H1 (cell line): ENCODE measurements at regions of chr7 and their contacts with region 1.

Region 1: DNA sequence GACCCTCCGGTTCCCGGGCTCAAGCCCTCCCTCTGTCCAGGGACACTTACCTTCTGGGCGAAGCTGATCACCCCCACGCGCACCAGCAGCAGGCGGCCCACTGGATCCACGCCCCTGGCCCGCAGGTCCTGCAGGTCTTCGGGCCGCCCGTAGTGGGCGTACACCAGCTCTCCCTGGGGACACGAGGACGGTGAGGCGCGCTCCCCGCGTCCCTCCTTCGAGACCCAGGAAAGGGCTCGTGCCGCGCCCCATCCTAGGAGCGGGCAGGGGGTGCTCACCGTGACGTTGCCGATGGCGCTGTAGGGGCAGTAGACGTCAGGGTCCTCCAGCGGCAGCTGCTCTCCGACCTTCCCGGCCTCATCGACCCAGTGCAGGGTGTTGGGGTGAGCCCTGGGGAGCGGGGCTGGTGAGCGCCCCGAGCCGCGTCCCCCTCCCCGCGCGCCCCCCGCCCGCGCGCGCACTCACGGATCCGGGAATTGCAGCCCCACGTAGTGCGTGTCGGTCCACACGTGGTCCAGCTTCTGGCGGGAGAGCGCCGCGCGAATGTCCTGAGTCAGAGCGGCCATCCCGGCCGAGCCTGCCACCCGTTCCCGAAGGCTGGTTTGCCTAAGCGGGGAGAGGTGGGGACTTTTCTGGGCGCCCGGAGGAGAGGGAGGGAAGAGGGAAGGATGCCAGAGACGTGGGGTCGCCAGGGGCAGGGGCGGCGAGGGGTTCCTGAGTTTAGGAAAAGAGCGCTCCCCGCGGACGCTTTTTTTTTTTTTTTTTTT is 8.2 kb downstream of the TFR2 start:
- DNase-seq: peak in 1 of 2 experiments; percentile 84
- H3K4me3 ChIP-seq: peak overlapping the region; percentile 60 to 89 (median 61)
- H3K27ac ChIP-seq: no peak overlapping the region
- H3K4me1 ChIP-seq: peaks cover 0 to 3% (median 3%) of the 10 kb centered on the region in 4 experiments; a peak in 5 of 7 replicates
- H3K27me3 ChIP-seq: peaks cover 0 to 16% (median 9%) of the 10 kb centered on the region in 4 experiments; a peak in 5 of 7 replicates
- CTCF ChIP-seq: peak; percentile 45 to 71 (median 63)
- EP300 ChIP-seq: no peak
- POLR2A ChIP-seq: no peak
- RAD21 ChIP-seq: peak; percentile 22 to 32; a peak in 2 of 4 replicates

Region 2: DNA sequence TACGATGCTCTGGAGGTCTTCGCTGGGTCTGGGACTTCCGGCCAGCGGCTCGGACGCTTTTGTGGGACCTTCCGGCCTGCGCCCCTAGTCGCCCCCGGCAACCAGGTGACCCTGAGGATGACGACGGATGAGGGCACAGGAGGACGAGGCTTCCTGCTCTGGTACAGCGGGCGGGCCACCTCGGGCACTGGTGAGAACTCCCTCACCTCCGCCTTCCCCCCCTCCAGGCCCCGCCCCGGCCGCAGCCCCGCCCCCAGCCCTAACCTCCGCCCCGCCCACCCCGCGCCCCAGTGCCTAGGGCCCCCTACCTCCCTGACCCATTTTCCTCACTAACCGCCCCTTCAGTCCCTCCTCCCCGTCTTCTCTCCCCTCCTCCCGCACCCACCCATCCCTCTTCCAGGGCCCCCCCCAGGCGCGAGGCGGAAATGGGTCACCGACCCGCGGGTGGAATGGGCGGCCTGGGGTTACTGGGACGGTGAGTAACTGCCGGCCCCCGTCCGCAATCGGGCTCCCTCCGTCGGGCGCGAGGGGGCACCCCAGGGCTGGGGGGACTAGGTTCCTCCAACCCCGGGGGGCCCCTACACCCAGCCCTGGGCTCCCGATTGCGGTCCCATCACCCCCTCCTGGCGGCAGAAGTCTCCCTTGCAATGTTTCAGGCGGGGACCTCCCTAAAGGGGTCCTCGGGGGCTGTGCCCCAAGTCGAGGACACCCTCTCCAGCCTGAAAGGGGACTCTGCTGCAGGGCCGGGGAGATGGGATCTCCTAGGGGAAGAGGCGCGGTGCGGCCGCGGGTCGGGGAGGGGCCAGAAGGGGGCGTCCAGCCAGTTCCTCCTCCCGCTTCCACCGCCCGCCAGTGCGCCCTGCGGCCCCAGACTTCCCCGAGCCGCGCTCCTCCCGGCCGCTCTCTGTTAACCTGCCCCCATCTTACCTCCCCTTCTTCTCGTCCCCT is 28.8 kb before region 1 on chr7:
- CTCF ChIA-PET with region 1: interaction called, 11 read pairs
- POLR2A ChIA-PET with region 1: interaction called, 5 read pairs
- DNase-seq: peak in 1 of 2 experiments; percentile 92
- H3K4me3 ChIP-seq: peak overlapping the region; percentile 68 to 82 (median 78)
- H3K27ac ChIP-seq: peak overlapping the region; percentile 48; the same call in 1 of the 2 replicates
- H3K4me1 ChIP-seq: peaks cover 0 to 31% (median 20%) of the 10 kb centered on the region in 4 experiments; a peak in 6 of 7 replicates
- H3K27me3 ChIP-seq: peaks cover 0 to 10% (median 4%) of the 10 kb centered on the region in 4 experiments; a peak in 2 of 7 replicates
- CTCF ChIP-seq: peak in 1 of 3 experiments; percentile 27; a peak in 2 of 4 replicates
- EP300 ChIP-seq: no peak
- POLR2A ChIP-seq: peak in 1 of 2 experiments; percentile 88; a peak in 2 of 3 replicates
- RAD21 ChIP-seq: peak; percentile 12 to 16; a peak in 2 of 4 replicates

Region 3: GRCh38 chr7:100621554-100621953 is 11.6 kb before region 1 on chr7:
- CTCF ChIA-PET with region 1: interaction called, 73 read pairs
- POLR2A ChIA-PET with region 1: interaction called, 9 read pairs
- DNase-seq: no peak
- H3K4me3 ChIP-seq: no peak overlapping the region
- H3K27ac ChIP-seq: no peak overlapping the region
- H3K4me1 ChIP-seq: peaks cover 0 to 5% (median 0%) of the 10 kb centered on the region in 4 experiments; a peak in 1 of 7 replicates
- H3K27me3 ChIP-seq: peaks cover 0 to 5% (median 2%) of the 10 kb centered on the region in 4 experiments; a peak in 3 of 7 replicates
- CTCF ChIP-seq: no peak
- EP300 ChIP-seq: no peak
- POLR2A ChIP-seq: no peak
- RAD21 ChIP-seq: no peak

Region 4: GRCh38 chr7:100655908-100656674 is 23.0 kb after region 1 on chr7 and contains the start of gene ACTL6B:
- CTCF ChIA-PET with region 1: interaction called, 46 read pairs
- POLR2A ChIA-PET with region 1: interaction called, 7 read pairs
- DNase-seq: peak in 1 of 2 experiments; percentile 99
- H3K4me3 ChIP-seq: peak within 1 kb of the TSS; percentile 9 to 45 (median 24); a peak in 6 of 8 replicates
- H3K27ac ChIP-seq: no peak within 1 kb of the TSS
- H3K4me1 ChIP-seq: peaks cover 0 to 5% (median 0%) of the 10 kb centered on the region in 4 experiments; a peak in 2 of 7 replicates
- H3K27me3 ChIP-seq: peaks cover 10 to 35% (median 23%) of the 10 kb centered on the region in 4 experiments
- CTCF ChIP-seq: no peak
- EP300 ChIP-seq: no peak
- POLR2A ChIP-seq: no peak
- RAD21 ChIP-seq: no peak
- total RNA-seq, gene ACTL6B: 1.7 and 2.1 TPM in 2 replicates

Region 5: GRCh38 chr7:100675581-100676350 is 42.6 kb after region 1 on chr7:
- CTCF ChIA-PET with region 1: interaction called, 12 read pairs
- POLR2A ChIA-PET with region 1: interaction called, 20 read pairs
- DNase-seq: peak in 1 of 2 experiments; percentile 80
- H3K4me3 ChIP-seq: peak overlapping the region; percentile 43 to 99 (median 62)
- H3K27ac ChIP-seq: no peak overlapping the region
- H3K4me1 ChIP-seq: peaks cover 0 to 7% (median 2%) of the 10 kb centered on the region in 4 experiments; a peak in 6 of 7 replicates
- H3K27me3 ChIP-seq: peaks cover 0 to 8% (median 6%) of the 10 kb centered on the region in 4 experiments; a peak in 4 of 7 replicates
- CTCF ChIP-seq: no peak
- EP300 ChIP-seq: no peak
- POLR2A ChIP-seq: no peak
- RAD21 ChIP-seq: no peak

Region 6: DNA sequence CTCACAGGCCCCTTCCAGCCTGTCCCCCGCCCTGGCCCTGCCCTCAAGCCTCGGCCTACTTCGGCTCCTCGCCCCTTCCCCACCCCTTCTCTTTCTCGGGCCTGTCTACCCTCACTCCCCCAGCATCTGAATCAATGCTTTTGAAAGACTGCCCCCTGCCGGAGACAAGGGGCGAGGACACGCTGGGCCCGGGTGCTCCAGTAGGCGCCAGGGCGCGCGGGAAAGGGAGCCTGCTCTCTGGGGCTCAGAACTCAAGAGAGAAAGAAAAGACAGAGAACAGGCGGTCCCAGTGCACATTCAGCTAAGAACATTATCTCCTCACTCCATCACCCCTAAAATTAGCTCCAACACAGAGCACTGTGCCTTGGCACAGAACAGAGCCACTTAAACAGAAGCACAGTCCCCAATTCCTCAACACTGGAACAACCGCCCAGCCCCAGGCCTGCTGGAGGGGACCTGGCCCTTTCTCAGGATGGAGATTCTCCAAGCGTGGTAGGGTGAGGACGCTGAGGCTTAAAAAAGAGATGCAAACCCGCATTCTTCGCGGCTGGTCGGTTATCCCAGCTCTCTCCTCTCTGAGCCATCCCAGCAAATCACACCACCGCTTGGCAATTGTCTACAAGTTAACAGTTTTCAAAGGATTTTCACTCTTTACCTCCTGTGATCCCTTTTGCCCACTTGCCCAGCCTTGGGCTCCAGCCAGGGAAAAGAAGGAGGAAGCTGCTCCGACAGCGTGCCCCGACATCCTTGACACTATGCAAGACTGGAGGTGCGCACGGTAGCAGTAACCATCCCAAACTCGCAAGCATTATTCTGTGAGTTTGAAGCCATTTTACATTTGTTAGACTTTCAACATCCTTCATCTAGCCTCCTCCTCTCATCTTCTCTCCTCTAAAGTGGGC is 58.8 kb after region 1 on chr7:
- CTCF ChIA-PET with region 1: interaction called, 38 read pairs
- POLR2A ChIA-PET with region 1: interaction called, 10 read pairs
- DNase-seq: peak; percentile 54 to 96
- H3K4me3 ChIP-seq: peak overlapping the region; percentile 82 to 95 (median 90)
- H3K27ac ChIP-seq: no peak overlapping the region
- H3K4me1 ChIP-seq: peaks cover 6 to 20% (median 12%) of the 10 kb centered on the region in 4 experiments
- H3K27me3 ChIP-seq: no peaks in the 10 kb centered on the region
- CTCF ChIP-seq: peak in 2 of 3 experiments; percentile 87 to 93; a peak in 3 of 4 replicates
- EP300 ChIP-seq: no peak
- POLR2A ChIP-seq: peak in 1 of 2 experiments; percentile 66; a peak in 1 of 3 replicates
- RAD21 ChIP-seq: peak; percentile 66 to 80

Region 7: DNA sequence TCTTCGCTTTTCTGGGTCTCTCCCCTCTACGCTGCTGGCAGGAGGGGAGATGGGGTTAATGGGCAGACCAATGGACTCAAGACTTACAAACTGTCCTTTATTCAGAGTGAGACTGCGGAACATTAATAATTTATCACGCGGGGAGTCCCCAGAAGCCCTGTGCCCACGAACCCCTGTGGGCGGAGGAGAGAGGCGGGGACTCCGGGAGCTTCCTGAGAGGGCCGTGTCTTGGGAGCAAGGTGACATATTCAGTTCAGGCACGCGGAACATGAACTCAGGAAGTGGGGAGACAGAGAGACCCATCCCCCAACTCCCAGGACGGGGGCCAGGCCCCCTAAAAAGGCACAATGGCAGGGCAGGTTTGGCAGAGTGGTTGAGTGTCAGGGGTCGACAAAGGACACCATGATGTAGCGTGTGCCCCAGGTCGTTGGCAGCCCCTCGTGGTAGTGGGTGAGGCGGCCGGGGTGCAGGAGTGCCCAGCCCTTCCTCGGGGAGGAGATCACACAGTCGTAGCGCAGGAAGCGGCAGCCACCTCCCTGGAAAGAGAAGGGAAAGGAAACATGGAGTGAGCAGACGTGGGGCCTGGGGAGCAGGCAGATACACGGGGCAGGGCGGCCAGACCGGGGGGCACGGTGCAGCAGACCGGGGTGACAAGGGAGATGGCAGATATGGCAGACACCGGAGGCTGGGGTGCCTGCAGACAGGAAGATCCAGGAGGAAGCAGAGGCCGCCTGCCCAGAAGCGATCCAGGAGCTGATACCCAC is 572.9 kb after region 1 on chr7:
- CTCF ChIA-PET with region 1: no interaction called
- POLR2A ChIA-PET with region 1: no interaction called
- DNase-seq: no peak
- H3K4me3 ChIP-seq: no peak overlapping the region
- H3K27ac ChIP-seq: no peak overlapping the region
- H3K4me1 ChIP-seq: peaks cover under 1 to 8% (median 5%) of the 10 kb centered on the region in 4 experiments; a peak in 6 of 7 replicates
- H3K27me3 ChIP-seq: peaks cover 0 to 16% (median 7%) of the 10 kb centered on the region in 4 experiments; a peak in 5 of 7 replicates
- CTCF ChIP-seq: no peak
- EP300 ChIP-seq: no peak
- POLR2A ChIP-seq: no peak
- RAD21 ChIP-seq: no peak

Region 8: GRCh38 chr7:101258243-101258731 is 625.2 kb after region 1 on chr7:
- CTCF ChIA-PET with region 1: no interaction called
- POLR2A ChIA-PET with region 1: no interaction called
- DNase-seq: no peak
- H3K4me3 ChIP-seq: no peak overlapping the region
- H3K27ac ChIP-seq: no peak overlapping the region
- H3K4me1 ChIP-seq: no peaks in the 10 kb centered on the region
- H3K27me3 ChIP-seq: no peaks in the 10 kb centered on the region; a peak in 1 of 7 replicates
- CTCF ChIP-seq: no peak
- EP300 ChIP-seq: no peak
- POLR2A ChIP-seq: no peak
- RAD21 ChIP-seq: no peak